ENCODE measurements at regions of chrX and their contacts with region 1.

Region 1: GRCh38 chrX:46978341-46979291 is 66.4 kb downstream of the JADE3 start:
- DNase-seq: peak; percentile 39
- ATAC-seq: peak; percentile 99
- H3K4me3 ChIP-seq: no peak overlapping the region
- H3K27ac ChIP-seq: no peak overlapping the region
- H3K4me1 ChIP-seq: no peaks in the 10 kb centered on the region
- H3K27me3 ChIP-seq: peaks cover 0 to 2% of the 10 kb centered on the region in 2 experiments; a peak in 1 of 4 replicates
- CTCF ChIP-seq: peak; percentile 78 to 86 (median 79)
- EP300 ChIP-seq: no peak
- POLR2A ChIP-seq: no peak
- RAD21 ChIP-seq: peak; percentile 76

Region 2: GRCh38 chrX:46739736-46740135 is 238.9 kb before region 1 on chrX:
- CTCF ChIA-PET with region 1: no interaction called
- POLR2A ChIA-PET with region 1: no interaction called
- RAD21 ChIA-PET with region 1: no interaction called
- SMC1A ChIA-PET with region 1: no interaction called
- in situ Hi-C with region 1: no loop called
- intact Hi-C with region 1: no loop called
- DNase-seq: no peak
- ATAC-seq: no peak
- H3K4me3 ChIP-seq: no peak overlapping the region
- H3K27ac ChIP-seq: no peak overlapping the region
- H3K4me1 ChIP-seq: no peaks in the 10 kb centered on the region
- H3K27me3 ChIP-seq: no peaks in the 10 kb centered on the region
- CTCF ChIP-seq: no peak
- EP300 ChIP-seq: no peak
- POLR2A ChIP-seq: no peak
- RAD21 ChIP-seq: no peak

Region 3: GRCh38 chrX:46803140-46803539 is 175.5 kb before region 1 on chrX:
- CTCF ChIA-PET with region 1: interaction called, 3 read pairs
- POLR2A ChIA-PET with region 1: no interaction called
- RAD21 ChIA-PET with region 1: interaction called, 3 read pairs
- SMC1A ChIA-PET with region 1: interaction called, 4 read pairs
- in situ Hi-C with region 1: no loop called
- intact Hi-C with region 1: loop called (anchors 2 kb)
- DNase-seq: no peak
- ATAC-seq: peak; percentile 53
- H3K4me3 ChIP-seq: no peak overlapping the region
- H3K27ac ChIP-seq: no peak overlapping the region
- H3K4me1 ChIP-seq: no peaks in the 10 kb centered on the region
- H3K27me3 ChIP-seq: no peaks in the 10 kb centered on the region; a peak in 1 of 4 replicates
- CTCF ChIP-seq: peak; percentile 27 to 37 (median 34); a peak in 4 of 6 replicates
- EP300 ChIP-seq: no peak
- POLR2A ChIP-seq: no peak
- RAD21 ChIP-seq: peak; percentile 38; the same call in 1 of the 2 replicates

Region 4: DNA sequence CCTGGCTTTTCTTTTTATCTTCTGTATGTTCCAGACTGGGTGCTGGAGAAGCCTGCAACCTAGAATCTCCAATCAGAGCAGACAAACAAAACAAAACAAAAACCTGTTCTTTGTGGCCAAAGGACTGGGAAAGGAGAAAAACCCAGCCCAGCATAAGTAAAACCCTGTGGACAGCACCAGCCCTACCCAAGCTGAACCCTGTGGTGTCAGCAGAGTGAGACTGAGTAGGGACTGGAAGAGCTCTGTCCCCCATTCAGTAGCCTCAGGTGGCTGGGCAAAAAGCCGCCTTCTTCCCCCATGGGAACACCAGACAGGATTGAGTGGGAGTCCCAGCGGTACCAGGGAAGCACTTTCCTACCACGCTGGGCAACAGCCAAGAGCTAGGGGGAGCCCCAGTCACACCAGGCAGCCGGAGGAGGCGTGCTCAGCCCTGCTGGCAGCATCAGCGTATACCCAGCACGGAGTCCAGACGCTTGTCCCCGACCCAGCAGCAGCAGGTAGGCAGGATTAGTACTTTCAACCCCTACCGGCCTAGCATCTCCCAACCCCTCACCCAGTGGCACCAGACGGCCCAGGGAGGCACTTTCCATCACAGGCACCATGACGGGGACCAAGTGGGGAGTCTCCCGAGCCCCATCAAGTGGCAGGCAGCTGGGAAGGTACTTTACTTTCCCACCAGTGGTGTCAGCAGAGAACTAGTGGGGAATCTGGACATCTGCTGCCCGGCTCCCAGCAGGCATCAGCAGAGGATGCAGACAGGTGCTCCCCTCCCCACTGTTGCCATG is 75.0 kb before region 1 on chrX:
- CTCF ChIA-PET with region 1: interaction called, 38 read pairs
- POLR2A ChIA-PET with region 1: no interaction called
- RAD21 ChIA-PET with region 1: interaction called, 29 read pairs
- SMC1A ChIA-PET with region 1: interaction called, 23 read pairs
- in situ Hi-C with region 1: no loop called
- intact Hi-C with region 1: loop called (anchors 1 kb)
- DNase-seq: peak; percentile 48
- ATAC-seq: peak; percentile 100
- H3K4me3 ChIP-seq: peak overlapping the region; percentile 33; the same call in 1 of the 2 replicates
- H3K27ac ChIP-seq: no peak overlapping the region
- H3K4me1 ChIP-seq: no peaks in the 10 kb centered on the region
- H3K27me3 ChIP-seq: no peaks in the 10 kb centered on the region
- CTCF ChIP-seq: peak; percentile 60 to 67 (median 66)
- EP300 ChIP-seq: no peak
- POLR2A ChIP-seq: no peak
- RAD21 ChIP-seq: peak; percentile 65

Region 5: GRCh38 chrX:46912098-46912602 is 66.5 kb before region 1 on chrX and contains the start of gene JADE3:
- CTCF ChIA-PET with region 1: interaction called, 4 read pairs
- POLR2A ChIA-PET with region 1: no interaction called
- RAD21 ChIA-PET with region 1: interaction called, 6 read pairs
- SMC1A ChIA-PET with region 1: interaction called, 3 read pairs
- in situ Hi-C with region 1: no loop called
- intact Hi-C with region 1: loop called (anchors 2 kb)
- DNase-seq: no peak
- ATAC-seq: peak; percentile 59
- H3K4me3 ChIP-seq: peak within 1 kb of the TSS; percentile 14; the same call in 1 of the 2 replicates
- H3K27ac ChIP-seq: no peak within 1 kb of the TSS
- H3K4me1 ChIP-seq: no peaks in the 10 kb centered on the region
- H3K27me3 ChIP-seq: peaks cover 0 to 1% of the 10 kb centered on the region in 2 experiments; a peak in 2 of 4 replicates
- CTCF ChIP-seq: peak in 1 of 3 experiments; percentile 3; a peak in 1 of 6 replicates
- EP300 ChIP-seq: no peak
- POLR2A ChIP-seq: no peak
- RAD21 ChIP-seq: no peak
- polyA plus RNA-seq, gene JADE3: 0.06 to 0.13 TPM

Region 6: DNA sequence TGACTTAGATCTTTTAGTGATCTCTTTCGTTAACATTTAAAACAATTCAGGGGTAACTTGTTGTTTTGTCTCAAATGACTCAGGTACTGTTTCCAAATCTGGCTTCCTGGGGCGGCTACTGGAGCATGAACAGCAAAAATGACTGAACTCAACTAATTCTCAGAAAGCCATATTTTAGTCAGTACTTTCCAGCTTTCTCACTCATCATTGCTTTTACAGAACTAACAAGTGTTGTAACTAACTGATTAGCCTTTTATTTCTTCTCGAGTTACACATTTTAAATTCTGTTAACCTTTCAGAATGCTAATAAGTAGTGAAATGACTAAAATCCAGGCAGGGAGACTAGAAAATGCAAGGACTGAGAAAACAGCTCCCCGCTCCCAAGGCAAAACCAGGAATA is 11.1 kb before region 1 on chrX:
- CTCF ChIA-PET with region 1: interaction called, 16 read pairs
- POLR2A ChIA-PET with region 1: no interaction called
- RAD21 ChIA-PET with region 1: interaction called, 5 read pairs
- SMC1A ChIA-PET with region 1: interaction called, 6 read pairs
- in situ Hi-C with region 1: no loop called
- intact Hi-C with region 1: no loop called
- DNase-seq: peak; percentile 56
- ATAC-seq: peak; percentile 77
- H3K4me3 ChIP-seq: no peak overlapping the region
- H3K27ac ChIP-seq: 0 out of 2 replicates have a peak overlapping the region, but pooled peaks have one; percentile 31
- H3K4me1 ChIP-seq: peaks cover 17% of the 10 kb centered on the region
- H3K27me3 ChIP-seq: peaks cover 0 to 5% of the 10 kb centered on the region in 2 experiments; a peak in 1 of 4 replicates
- CTCF ChIP-seq: no peak
- EP300 ChIP-seq: peak; percentile 29 to 77; a peak in 3 of 4 replicates
- POLR2A ChIP-seq: no peak
- RAD21 ChIP-seq: no peak